Adrenal gland (tissue), 19 donors: ENCODE measurements at regions of chr4 and their contacts with region 1.

Region 1: GRCh38 chr4:118981839-118982381 is 93.3 kb downstream of the SYNPO2 start:
- DNase-seq: peak; percentile 58 to 86 (median 66)
- H3K4me3 ChIP-seq: no peak overlapping the region
- H3K27ac ChIP-seq: no peak overlapping the region
- H3K4me1 ChIP-seq: peaks cover 0 to 4% of the 10 kb centered on the region in 2 donors
- H3K27me3 ChIP-seq: no peaks in the 10 kb centered on the region
- CTCF ChIP-seq: peak; percentile 62 to 93 (median 84)
- POLR2A ChIP-seq: no peak

Region 2: DNA sequence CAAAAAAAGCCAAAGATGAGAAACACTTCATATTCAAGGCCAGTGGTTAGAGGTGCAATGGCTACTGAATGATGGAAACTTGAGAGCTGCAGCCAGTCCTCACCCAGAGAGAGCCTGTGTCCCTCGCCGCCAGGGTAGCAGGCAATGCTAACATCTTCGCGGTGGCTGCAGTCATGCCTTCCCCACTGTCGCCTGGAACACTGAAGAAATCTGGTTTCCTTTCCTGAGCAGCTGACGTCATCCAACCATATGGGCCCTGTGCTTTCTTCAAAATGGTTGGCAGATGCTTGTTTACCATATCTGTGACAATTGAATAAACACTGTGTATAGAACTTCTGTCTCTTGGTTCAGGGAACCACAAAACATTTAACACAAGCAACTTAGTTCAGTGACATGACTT is 668.8 kb before region 1 on chr4:
- intact Hi-C with region 1: no loop called
- DNase-seq: no peak
- H3K4me3 ChIP-seq: no peak overlapping the region
- H3K27ac ChIP-seq: no peak overlapping the region
- H3K4me1 ChIP-seq: no peaks in the 10 kb centered on the region
- H3K27me3 ChIP-seq: no peaks in the 10 kb centered on the region
- CTCF ChIP-seq: no peak
- POLR2A ChIP-seq: no peak

Region 3: GRCh38 chr4:119041951-119042560 is 60.1 kb after region 1 on chr4:
- intact Hi-C with region 1: loop called in 1 of 2 experiments (anchors 10 kb)
- DNase-seq: peak; percentile 38 to 84 (median 60)
- H3K4me3 ChIP-seq: no peak overlapping the region
- H3K27ac ChIP-seq: peak overlapping the region in 2 of 5 donors; percentile 1 to 16
- H3K4me1 ChIP-seq: peaks cover 3 to 21% of the 10 kb centered on the region in 2 donors
- H3K27me3 ChIP-seq: no peaks in the 10 kb centered on the region
- CTCF ChIP-seq: peak; percentile 41 to 70 (median 66)
- POLR2A ChIP-seq: no peak

Region 4: GRCh38 chr4:119525005-119525749 is 543.3 kb after region 1 on chr4:
- intact Hi-C with region 1: no loop called
- DNase-seq: no peak
- H3K4me3 ChIP-seq: no peak overlapping the region
- H3K27ac ChIP-seq: peak overlapping the region in 2 of 5 donors; percentile 14 to 49
- H3K4me1 ChIP-seq: peaks cover 0 to 5% of the 10 kb centered on the region in 2 donors
- H3K27me3 ChIP-seq: no peaks in the 10 kb centered on the region
- CTCF ChIP-seq: no peak
- POLR2A ChIP-seq: no peak